Dendritic cell treated with granulocyte-macrophage colony-stimulating factor and Interleukin-4, amounts not matched to agents 40 ng/mL and 50 ng/mL, for 4 days (primary cell): ENCODE measurements at regions of chr12 and their contacts with region 1.

Region 1: GRCh38 chr12:59444932-59445331 is 150.9 kb upstream of the SLC16A7 start:
- H3K4me3 Mint-ChIP-seq: no peak overlapping the region
- H3K27ac Mint-ChIP-seq: no peak overlapping the region
- H3K4me1 Mint-ChIP-seq: no peaks in the 10 kb centered on the region
- H3K27me3 Mint-ChIP-seq: no peaks in the 10 kb centered on the region

Region 2: GRCh38 chr12:58681731-58682130 is 763.2 kb before region 1 on chr12:
- intact Hi-C with region 1: no loop called
- H3K4me3 Mint-ChIP-seq: no peak overlapping the region
- H3K27ac Mint-ChIP-seq: no peak overlapping the region
- H3K4me1 Mint-ChIP-seq: no peaks in the 10 kb centered on the region
- H3K27me3 Mint-ChIP-seq: no peaks in the 10 kb centered on the region

Region 3: GRCh38 chr12:59780605-59781135 is 335.7 kb after region 1 on chr12:
- intact Hi-C with region 1: loop called (anchors 5 kb)
- H3K4me3 Mint-ChIP-seq: no peak overlapping the region
- H3K27ac Mint-ChIP-seq: no peak overlapping the region
- H3K4me1 Mint-ChIP-seq: no peaks in the 10 kb centered on the region
- H3K27me3 Mint-ChIP-seq: no peaks in the 10 kb centered on the region

Region 4: GRCh38 chr12:59808317-59808910 is 363.5 kb after region 1 on chr12:
- intact Hi-C with region 1: loop called (anchors 10 kb)
- H3K4me3 Mint-ChIP-seq: no peak overlapping the region
- H3K27ac Mint-ChIP-seq: no peak overlapping the region
- H3K4me1 Mint-ChIP-seq: no peaks in the 10 kb centered on the region
- H3K27me3 Mint-ChIP-seq: no peaks in the 10 kb centered on the region

Region 5: DNA sequence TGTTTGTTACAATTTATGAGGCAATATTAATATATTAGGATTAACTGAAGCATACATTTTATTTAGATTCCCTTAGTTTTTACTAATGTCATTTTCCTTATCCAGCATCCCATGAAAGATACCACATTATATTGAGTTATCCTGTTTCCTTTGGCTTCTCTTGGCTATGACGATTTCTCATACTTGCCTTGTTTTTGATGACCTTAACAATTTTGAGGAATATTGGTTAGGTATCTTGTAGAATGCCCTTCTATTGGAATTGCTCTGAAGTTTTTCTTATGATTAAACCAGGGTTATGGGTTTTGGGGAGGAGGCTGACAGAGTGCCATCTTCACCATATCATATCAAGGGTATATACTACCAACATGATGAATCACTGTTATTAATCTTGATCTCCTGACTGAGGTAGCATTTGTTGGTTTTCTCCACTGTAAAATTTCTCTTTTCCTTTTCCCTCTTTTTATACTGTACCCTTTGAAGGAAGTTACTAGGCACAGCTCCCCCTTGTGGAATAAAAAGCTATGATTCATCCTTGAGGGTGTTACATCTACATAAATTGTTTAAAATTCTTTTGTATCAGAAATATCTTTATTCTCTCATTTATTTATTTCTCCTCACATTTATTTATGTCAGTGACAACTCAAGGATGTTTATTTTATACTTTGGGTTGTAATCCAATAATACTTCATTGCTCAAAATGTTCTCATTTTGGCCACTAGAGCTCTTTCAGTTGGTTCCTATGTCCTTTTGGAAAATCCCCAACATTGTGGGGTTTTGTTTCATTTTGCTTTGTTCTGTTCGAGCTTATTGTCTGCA is 389.9 kb after region 1 on chr12:
- intact Hi-C with region 1: loop called (anchors 10 kb)
- H3K4me3 Mint-ChIP-seq: no peak overlapping the region
- H3K27ac Mint-ChIP-seq: no peak overlapping the region
- H3K4me1 Mint-ChIP-seq: no peaks in the 10 kb centered on the region
- H3K27me3 Mint-ChIP-seq: no peaks in the 10 kb centered on the region